Breast epithelium (tissue), 4 donors: ENCODE measurements at regions of chr9 and their contacts with region 1.

Region 1: DNA sequence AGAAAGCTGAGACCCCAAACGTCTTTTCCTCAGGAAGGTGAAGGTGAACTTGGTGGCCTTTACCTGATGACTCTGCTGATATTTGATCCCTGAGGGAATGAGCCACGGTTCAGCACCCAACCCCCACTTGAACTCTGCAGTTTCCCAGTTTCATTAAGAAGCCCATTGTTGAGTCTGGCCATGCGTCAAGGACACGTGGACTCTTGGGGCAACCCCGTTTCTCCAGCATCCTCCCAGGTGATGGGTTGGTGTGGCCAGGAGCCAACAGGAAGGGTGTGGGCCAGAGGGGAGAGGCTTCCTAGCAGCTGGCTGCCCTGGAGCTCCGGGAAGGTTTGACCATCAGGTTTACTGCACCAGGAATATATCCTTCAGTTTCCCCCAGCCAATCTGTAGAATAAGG is 59.5 kb upstream of the GNE start:
- DNase-seq: peak; percentile 78 to 83
- H3K4me3 ChIP-seq: no peak overlapping the region
- H3K27ac ChIP-seq: peak overlapping the region; percentile 76 to 79
- H3K4me1 ChIP-seq: peaks cover 0 to 5% of the 10 kb centered on the region in 2 donors
- H3K27me3 ChIP-seq: no peaks in the 10 kb centered on the region
- CTCF ChIP-seq: no peak
- POLR2A ChIP-seq: no peak

Region 2: DNA sequence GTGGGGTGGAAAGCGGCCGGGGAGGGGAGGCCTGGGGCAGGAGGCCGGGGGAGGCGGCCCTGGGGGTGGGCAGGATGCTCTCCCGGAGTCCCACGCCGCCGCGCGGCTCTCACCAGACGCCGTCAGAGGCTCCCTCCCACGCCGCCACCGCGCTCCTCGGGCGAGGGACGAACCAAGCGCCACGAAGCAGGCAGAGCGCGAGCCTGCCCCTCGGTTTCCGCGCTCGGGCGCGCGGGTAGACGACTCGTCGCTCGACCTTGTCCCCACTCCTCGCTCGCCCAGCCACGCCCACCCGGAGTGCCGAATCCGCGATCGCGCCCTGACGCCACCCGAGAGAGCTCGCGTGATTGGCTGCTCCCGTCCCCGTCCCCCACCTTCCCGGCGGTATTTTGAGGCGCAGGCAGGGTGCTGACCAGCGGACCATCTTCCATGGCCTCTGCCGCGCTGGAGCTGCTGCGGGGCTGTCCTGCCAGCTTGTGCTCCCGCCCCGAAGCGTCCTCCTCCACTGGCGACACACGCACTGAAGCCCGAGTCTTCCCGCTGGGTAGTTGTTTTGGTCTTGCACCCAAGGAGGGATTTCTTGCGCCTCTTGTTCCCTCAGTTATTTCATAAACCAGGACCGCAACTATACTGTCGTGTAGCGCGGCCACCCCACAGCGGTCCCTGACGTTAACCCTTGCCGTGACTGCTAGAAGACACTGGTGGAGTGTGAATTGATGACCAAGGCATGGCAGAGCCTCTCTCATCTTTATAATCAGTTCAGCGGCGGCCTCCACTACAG is 59.4 kb before region 1 on chr9 and contains the start of gene GNE:
- intact Hi-C with region 1: loop called (anchors 2 kb)
- DNase-seq: peak; percentile 97 to 99
- H3K4me3 ChIP-seq: peak within 1 kb of the TSS; percentile 95 to 97 (median 95)
- H3K27ac ChIP-seq: peak within 1 kb of the TSS; percentile 96 to 99
- H3K4me1 ChIP-seq: no peaks in the 10 kb centered on the region
- H3K27me3 ChIP-seq: no peaks in the 10 kb centered on the region
- CTCF ChIP-seq: no peak
- POLR2A ChIP-seq: peak; percentile 96
- total RNA-seq, gene GNE: 24.9 to 38.2 (median 35.1) TPM

Region 3: DNA sequence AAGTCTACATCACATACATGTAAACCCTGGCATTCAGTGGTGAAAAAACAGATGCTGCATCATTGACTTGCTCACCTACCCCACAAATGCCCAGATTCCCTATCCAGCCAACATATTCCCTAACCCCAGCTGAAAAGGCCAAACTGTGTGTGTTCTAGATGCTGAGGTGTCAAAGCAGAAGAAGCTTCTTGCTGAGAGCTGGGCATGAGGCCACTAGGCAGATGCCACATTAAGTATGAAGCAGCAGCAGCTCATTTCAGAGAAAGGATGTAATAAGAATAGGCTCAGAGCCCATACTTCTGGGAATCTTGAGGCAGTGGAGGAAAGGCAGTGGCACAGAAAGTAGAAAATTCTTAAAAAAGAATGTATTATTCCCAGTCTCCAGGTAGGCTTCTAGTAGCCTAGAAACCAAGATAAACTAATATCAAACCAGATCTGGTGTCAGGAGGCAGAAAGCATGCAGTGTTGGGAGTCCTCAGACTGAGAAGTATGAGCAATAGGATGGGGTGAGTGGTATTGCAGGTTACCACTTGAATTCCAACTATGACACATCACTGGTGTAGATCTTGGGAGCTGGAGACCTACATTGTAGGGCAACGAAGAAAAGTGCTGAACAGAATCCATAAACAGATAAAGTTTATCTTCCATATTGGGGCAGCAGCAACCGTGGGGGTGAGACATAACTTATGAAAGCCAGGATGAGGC is 1032.9 kb after region 1 on chr9:
- intact Hi-C with region 1: loop called (anchors 10 kb)
- DNase-seq: no peak
- H3K4me3 ChIP-seq: no peak overlapping the region
- H3K27ac ChIP-seq: no peak overlapping the region
- H3K4me1 ChIP-seq: no peaks in the 10 kb centered on the region
- H3K27me3 ChIP-seq: no peaks in the 10 kb centered on the region
- CTCF ChIP-seq: no peak
- POLR2A ChIP-seq: no peak